ENCODE measurements at regions of chr15 and their contacts with region 1.

Region 1: DNA sequence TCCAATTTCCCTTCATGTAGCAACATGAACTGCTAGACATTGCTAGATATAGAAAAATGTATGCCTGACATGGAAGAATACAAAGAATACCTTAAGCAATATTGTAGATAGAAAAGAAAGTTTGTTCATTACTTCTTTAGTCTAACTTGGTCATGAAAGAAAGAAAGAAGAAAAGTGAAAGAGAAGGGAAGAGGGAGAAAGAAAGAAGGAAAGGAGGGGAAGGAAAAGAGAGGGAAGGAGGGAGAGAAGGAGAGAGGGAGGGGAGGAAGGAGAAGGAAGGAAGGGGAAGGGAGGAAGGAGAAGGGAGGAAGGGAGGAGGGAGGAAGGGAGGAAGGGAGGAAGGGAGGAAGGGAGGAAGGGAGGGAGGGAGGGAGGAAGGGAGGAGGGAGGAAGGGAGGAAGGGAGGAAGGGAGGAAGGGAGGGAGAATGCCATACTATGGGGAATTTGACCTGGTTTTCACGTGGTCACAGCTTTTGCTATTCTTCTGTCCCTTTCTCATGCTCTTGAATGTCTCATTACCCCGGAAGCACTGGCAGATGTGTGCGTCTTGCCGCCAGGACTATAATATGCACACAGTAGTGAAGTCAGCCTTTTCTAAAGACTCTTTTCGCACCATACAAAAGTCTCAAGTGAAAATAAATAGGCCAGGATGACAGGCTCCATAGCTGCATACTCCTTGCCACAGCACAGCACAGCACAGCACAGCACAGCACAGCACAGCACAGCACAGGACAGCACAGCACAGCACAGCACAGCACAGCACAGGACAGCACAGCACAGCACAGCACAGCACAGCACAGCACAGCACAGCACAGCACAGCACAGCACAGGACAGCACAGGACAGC is 78.2 kb downstream of the CHAC1 start:
- DNase-seq: no peak
- ATAC-seq: no peak; the same call in 1 of the 2 replicates
- H3K4me3 ChIP-seq: no peak overlapping the region
- H3K27ac ChIP-seq: no peak overlapping the region
- H3K4me1 ChIP-seq: no peaks in the 10 kb centered on the region
- H3K27me3 ChIP-seq: no peaks in the 10 kb centered on the region
- CTCF ChIP-seq: no peak

Region 2: DNA sequence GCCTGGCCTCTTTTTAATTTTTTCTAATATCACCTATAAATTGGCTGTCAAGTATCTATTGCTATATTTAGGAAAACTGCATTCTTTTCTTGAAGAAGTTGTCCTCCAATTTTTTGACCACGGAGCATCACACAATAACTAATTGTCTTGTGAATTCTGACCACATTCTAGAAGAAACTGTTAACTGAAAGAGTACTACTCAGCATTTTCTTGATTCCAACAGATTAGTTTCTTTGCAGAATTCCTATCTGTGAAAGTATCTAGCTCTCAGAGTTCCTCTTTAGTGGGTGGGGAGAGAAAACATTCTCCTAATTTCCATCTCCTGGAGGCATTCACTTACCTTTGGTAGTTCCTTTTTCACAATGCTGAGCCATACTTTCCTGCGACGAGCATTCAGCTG is 53.6 kb after region 1 on chr15:
- CTCF ChIA-PET with region 1: no interaction called
- POLR2A ChIA-PET with region 1: interaction called, 14 read pairs
- intact Hi-C with region 1: no loop called
- DNase-seq: no peak
- ATAC-seq: no peak
- H3K4me3 ChIP-seq: no peak overlapping the region
- H3K27ac ChIP-seq: no peak overlapping the region
- H3K4me1 ChIP-seq: no peaks in the 10 kb centered on the region
- H3K27me3 ChIP-seq: no peaks in the 10 kb centered on the region
- CTCF ChIP-seq: no peak